PC-9 (cell line): ENCODE measurements at regions of chr14 and their contacts with region 1.

Region 1: GRCh38 chr14:67710209-67710608 is 8.5 kb downstream of the RDH12 start:
- DNase-seq: no peak
- H3K4me3 ChIP-seq: no peak overlapping the region
- H3K27ac ChIP-seq: no peak overlapping the region
- H3K4me1 ChIP-seq: 0 out of 2 replicates have a peak, but pooled peaks cover 4% of the 10 kb centered on the region
- H3K27me3 ChIP-seq: no peaks in the 10 kb centered on the region
- CTCF ChIP-seq: no peak

Region 2: DNA sequence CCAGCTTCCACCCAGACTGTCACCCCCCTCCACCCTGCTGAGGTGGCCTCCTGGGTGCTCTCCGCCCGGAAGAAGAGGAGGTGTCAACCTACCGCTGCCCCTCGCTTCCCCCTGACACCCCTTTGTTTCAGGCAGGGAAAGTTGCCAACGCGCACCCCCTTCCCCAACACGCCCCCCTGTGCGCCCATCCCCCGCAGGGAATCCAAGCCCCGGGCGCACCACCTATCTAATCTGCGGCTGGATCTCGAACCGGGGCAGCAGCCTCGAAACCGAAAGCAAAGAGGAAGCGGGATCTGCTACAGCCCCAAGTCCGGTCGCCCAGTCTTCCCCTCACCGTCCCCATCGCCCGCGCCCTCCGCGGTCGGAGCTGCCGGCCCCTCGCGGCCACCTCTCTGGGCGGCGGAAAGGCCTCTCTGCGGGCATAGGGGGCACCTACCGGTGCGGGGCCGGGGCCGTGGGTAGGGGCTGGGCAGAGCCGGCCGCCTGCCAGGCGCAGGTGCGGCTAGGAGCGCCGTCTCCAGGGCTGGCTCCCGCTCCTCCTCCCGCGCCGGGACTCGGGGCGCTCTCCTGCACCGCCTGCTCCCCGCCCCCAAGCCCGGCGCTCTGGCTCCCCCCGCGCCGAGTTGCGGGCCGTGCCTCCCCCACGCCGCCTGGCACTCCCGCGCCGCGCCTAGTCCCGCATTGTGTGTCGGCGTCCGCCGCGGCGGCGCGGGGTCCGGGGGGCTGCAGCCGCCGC is 195.4 kb before region 1 on chr14:
- CTCF ChIA-PET with region 1: no interaction called
- POLR2A ChIA-PET with region 1: interaction called, 19 read pairs
- intact Hi-C with region 1: no loop called
- DNase-seq: peak in 1 of 2 experiments; percentile 44
- H3K4me3 ChIP-seq: peak overlapping the region; percentile 84
- H3K27ac ChIP-seq: no peak overlapping the region
- H3K4me1 ChIP-seq: peaks cover 25% of the 10 kb centered on the region
- H3K27me3 ChIP-seq: peaks cover 40% of the 10 kb centered on the region; the same call in 1 of the 2 replicates
- CTCF ChIP-seq: 0 out of 2 replicates have a peak, but pooled peaks have one; percentile 13

Region 3: GRCh38 chr14:67653651-67654280 is 56.4 kb before region 1 on chr14:
- CTCF ChIA-PET with region 1: no interaction called
- POLR2A ChIA-PET with region 1: no interaction called
- intact Hi-C with region 1: no loop called
- DNase-seq: no peak
- H3K4me3 ChIP-seq: no peak overlapping the region
- H3K27ac ChIP-seq: peak overlapping the region; percentile 24
- H3K4me1 ChIP-seq: 0 out of 2 replicates have a peak, but pooled peaks cover 7% of the 10 kb centered on the region
- H3K27me3 ChIP-seq: no peaks in the 10 kb centered on the region
- CTCF ChIP-seq: no peak

Region 4: GRCh38 chr14:68369281-68370056 is 659.3 kb after region 1 on chr14:
- CTCF ChIA-PET with region 1: no interaction called
- POLR2A ChIA-PET with region 1: interaction called, 18 read pairs
- intact Hi-C with region 1: no loop called
- DNase-seq: no peak
- H3K4me3 ChIP-seq: no peak overlapping the region
- H3K27ac ChIP-seq: no peak overlapping the region
- H3K4me1 ChIP-seq: peaks cover 12% of the 10 kb centered on the region
- H3K27me3 ChIP-seq: no peaks in the 10 kb centered on the region
- CTCF ChIP-seq: no peak